ENCODE measurements at regions of chrX and their contacts with region 1.

Region 1: GRCh38 chrX:134908356-134908755 is 82.4 kb upstream of the SMIM10 start:
- DNase-seq: no peak
- ATAC-seq: peak in 3 of 8 donors; percentile 22 to 59 (median 26)
- H3K4me3 ChIP-seq: no peak overlapping the region
- H3K27ac ChIP-seq: no peak overlapping the region
- H3K4me1 ChIP-seq: peaks cover 0 to 4% (median 0%) of the 10 kb centered on the region in 9 donors
- H3K27me3 ChIP-seq: no peaks in the 10 kb centered on the region
- CTCF ChIP-seq: peak in 4 of 9 donors; percentile 16 to 33 (median 24)

Region 2: DNA sequence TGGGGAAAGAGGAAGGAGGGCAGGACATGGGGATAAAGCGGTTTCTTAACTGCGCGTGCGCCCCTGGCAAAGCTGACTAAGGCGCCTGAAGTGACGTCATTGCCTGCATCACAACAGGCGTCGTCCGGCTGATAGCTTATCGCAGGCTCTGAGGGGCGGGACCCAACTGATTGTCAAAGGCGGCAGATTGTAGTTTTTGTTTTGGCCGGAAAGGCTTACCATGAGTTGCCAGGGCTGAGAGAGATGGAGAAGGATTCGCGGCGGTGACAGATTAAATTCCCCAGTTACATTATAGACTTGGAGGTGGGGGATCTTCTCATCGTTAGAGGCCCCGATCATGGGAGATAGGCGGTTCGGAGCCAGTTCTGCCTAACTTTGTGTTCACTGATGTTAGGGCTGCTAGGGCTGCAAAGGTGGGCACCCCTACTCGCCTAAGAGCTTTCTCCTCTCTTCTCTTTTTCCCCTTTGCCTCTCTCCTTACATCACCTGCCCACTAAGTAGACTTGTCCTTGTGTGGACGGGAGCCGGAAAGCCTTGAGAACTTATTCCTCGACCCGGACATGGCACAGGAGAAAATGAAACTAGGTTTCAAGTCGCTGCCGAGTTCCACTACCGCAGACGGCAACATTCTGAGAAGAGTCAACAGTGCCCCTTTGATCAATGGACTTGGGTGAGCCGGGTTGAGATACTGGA is 101.2 kb before region 1 on chrX:
- intact Hi-C with region 1: loop called in 3 of 10 experiments (anchors 10 kb)
- DNase-seq: peak; percentile 81 to 91
- ATAC-seq: peak; percentile 91 to 98 (median 96)
- H3K4me3 ChIP-seq: peak overlapping the region; percentile 47 to 76 (median 68)
- H3K27ac ChIP-seq: peak overlapping the region; percentile 61 to 93 (median 90)
- H3K4me1 ChIP-seq: peaks cover 0 to 5% (median 0%) of the 10 kb centered on the region in 9 donors
- H3K27me3 ChIP-seq: no peaks in the 10 kb centered on the region
- CTCF ChIP-seq: no peak

Measured in heart right ventricle (tissue), 16 donors.